Activated CD4-positive, alpha-beta T cell treated with anti-CD3 and anti-CD28 coated beads for 36 hours (primary cell): ENCODE measurements at regions of chr22 and their contacts with region 1.

Region 1: DNA sequence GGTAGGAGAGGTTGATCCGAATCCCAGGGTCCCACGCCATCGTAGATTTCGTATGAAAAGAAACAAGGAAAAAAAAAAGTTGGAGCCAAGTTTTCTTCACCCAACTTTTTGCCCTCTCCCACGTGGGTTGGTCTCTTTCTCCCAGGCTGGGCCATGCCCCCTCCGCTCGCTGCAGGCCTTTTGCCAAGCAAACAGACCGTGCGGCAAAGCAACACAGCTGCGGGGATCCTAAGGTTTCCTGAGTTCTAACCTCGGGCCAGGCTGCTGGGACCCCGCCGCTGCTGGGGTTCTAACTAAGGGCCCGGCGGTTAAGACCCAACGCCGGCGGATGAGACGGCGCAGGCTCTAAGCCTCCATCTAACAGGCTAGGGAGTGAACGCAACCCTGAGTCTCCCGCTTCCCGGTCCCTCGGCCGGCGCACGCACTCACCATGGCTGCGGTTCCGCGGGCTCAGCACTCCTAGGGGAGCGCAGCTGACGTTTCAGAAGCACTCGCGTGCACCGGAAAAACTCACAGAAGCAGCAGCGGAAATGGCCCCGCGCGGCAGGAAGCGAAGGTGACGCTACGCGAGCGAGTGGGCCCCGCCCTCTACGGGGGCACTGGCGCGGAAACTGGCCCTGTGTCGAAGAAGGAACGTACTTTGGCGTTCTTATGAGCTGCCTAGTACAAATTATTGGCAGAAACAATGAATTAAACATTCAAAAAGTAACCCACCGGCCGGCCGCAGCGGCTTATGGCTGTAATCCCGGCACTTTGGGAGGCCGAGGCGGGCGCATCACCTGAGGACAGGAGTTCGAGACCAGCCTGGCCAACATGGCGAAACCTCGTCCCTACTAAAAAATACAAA is at the start of gene SNU13:
- DNase-seq: peak; percentile 96
- ATAC-seq: peak; percentile 93
- H3K4me3 Mint-ChIP-seq: peak within 1 kb of the TSS; percentile 98
- H3K27ac Mint-ChIP-seq: peak within 1 kb of the TSS; percentile 98
- H3K4me1 Mint-ChIP-seq: peaks cover 34% of the 10 kb centered on the region
- H3K27me3 Mint-ChIP-seq: no peaks in the 10 kb centered on the region
- total RNA-seq, gene SNU13: 275 to 281 TPM

Region 2: GRCh38 chr22:41308544-41308947 is 380.0 kb before region 1 on chr22:
- CTCF ChIA-PET with region 1: no interaction called
- POLR2A ChIA-PET with region 1: no interaction called
- intact Hi-C with region 1: no loop called
- DNase-seq: no peak
- ATAC-seq: no peak
- H3K4me3 Mint-ChIP-seq: no peak overlapping the region
- H3K27ac Mint-ChIP-seq: no peak overlapping the region
- H3K4me1 Mint-ChIP-seq: peaks cover 27% of the 10 kb centered on the region
- H3K27me3 Mint-ChIP-seq: no peaks in the 10 kb centered on the region

Region 3: DNA sequence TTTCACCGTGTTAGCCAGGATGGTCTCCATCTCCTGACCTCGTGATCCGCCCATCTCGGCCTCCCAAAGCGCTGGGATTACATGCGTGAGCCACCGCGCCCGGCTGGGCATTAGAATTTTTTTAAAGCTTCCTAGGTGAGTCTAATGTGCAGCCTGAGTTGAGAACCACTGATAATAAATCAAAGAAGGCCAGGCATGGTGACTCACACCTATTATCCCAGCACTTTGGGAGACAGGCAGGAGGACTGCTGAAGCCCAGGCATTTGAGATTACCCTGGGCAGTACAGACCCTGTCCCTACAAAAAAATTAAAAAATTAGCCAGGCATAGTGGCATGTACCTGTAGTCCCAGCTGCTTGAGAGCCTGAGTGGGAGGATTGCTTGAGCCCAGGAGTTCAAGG is 24.4 kb after region 1 on chr22:
- CTCF ChIA-PET with region 1: no interaction called
- POLR2A ChIA-PET with region 1: no interaction called
- intact Hi-C with region 1: no loop called
- DNase-seq: no peak
- ATAC-seq: no peak
- H3K4me3 Mint-ChIP-seq: no peak overlapping the region
- H3K27ac Mint-ChIP-seq: no peak overlapping the region
- H3K4me1 Mint-ChIP-seq: no peaks in the 10 kb centered on the region
- H3K27me3 Mint-ChIP-seq: no peaks in the 10 kb centered on the region

Region 4: GRCh38 chr22:41800348-41801146 is 112.0 kb after region 1 on chr22 and contains the start of gene CCDC134:
- CTCF ChIA-PET with region 1: interaction called, 6 read pairs
- POLR2A ChIA-PET with region 1: interaction called, 5 read pairs
- intact Hi-C with region 1: loop called in 1 of 2 experiments (anchors 2 kb)
- DNase-seq: peak; percentile 95
- ATAC-seq: peak; percentile 98
- H3K4me3 Mint-ChIP-seq: peak within 1 kb of the TSS; percentile 91
- H3K27ac Mint-ChIP-seq: peak within 1 kb of the TSS; percentile 96
- H3K4me1 Mint-ChIP-seq: peaks cover 38% of the 10 kb centered on the region
- H3K27me3 Mint-ChIP-seq: no peaks in the 10 kb centered on the region
- total RNA-seq, gene CCDC134: 14.7 to 15.2 TPM